ENCODE measurements at regions of chr4 and their contacts with region 1.

Region 1: DNA sequence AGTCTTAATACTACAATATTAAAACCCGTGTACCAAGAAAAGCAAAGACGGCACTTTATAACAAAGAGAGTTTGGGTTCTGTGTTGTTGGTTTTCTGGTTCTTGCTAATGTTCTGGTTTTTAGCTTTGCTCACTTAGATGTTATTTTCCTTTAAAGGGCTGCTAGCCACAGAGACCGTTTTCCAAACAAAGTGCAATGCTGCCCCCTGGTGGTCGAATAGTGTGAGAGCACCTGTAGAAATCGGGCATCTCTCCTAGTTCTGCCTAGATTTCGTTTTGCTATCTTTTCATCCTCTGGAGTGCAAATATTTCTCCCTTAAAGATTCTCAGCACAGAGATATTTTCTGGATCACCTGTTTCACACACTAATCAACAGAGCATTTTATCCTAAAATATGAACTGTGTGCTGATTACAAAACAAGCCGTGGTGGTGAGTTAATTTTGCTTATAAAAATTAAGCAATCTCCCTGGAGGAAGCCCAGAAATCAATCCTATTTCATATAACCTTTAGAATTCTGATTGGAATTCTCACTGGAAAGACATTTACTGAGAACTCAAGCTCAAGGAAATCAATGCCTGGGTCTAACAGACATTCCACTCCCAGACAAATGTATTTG is 334.5 kb upstream of the NOCT start:
- DNase-seq: peak; percentile 42
- ATAC-seq: peak; percentile 86
- H3K4me3 ChIP-seq: no peak overlapping the region
- H3K27ac ChIP-seq: no peak overlapping the region
- H3K4me1 ChIP-seq: no peaks in the 10 kb centered on the region
- H3K27me3 ChIP-seq: no peaks in the 10 kb centered on the region; the same call in 1 of the 2 replicates
- CTCF ChIP-seq: peak; percentile 77

Region 2: GRCh38 chr4:138090150-138090917 is 590.8 kb before region 1 on chr4:
- CTCF ChIA-PET with region 1: no interaction called
- POLR2A ChIA-PET with region 1: no interaction called
- in situ Hi-C with region 1: no loop called
- intact Hi-C with region 1: loop called (anchors 10 kb)
- DNase-seq: peak; percentile 54
- ATAC-seq: peak; percentile 80
- H3K4me3 ChIP-seq: peak overlapping the region in 1 of 2 experiments; percentile 3; a peak in 1 of 4 replicates
- H3K27ac ChIP-seq: no peak overlapping the region
- H3K4me1 ChIP-seq: no peaks in the 10 kb centered on the region
- H3K27me3 ChIP-seq: no peaks in the 10 kb centered on the region
- CTCF ChIP-seq: peak; percentile 77

Region 3: GRCh38 chr4:138562544-138562991 is 118.5 kb before region 1 on chr4:
- CTCF ChIA-PET with region 1: no interaction called
- POLR2A ChIA-PET with region 1: no interaction called
- in situ Hi-C with region 1: no loop called
- intact Hi-C with region 1: no loop called
- DNase-seq: no peak
- ATAC-seq: no peak
- H3K4me3 ChIP-seq: no peak overlapping the region
- H3K27ac ChIP-seq: no peak overlapping the region
- H3K4me1 ChIP-seq: no peaks in the 10 kb centered on the region
- H3K27me3 ChIP-seq: no peaks in the 10 kb centered on the region
- CTCF ChIP-seq: no peak

Region 4: GRCh38 chr4:138870737-138871554 is 189.8 kb after region 1 on chr4:
- CTCF ChIA-PET with region 1: interaction called, 3 read pairs
- POLR2A ChIA-PET with region 1: no interaction called
- in situ Hi-C with region 1: no loop called
- intact Hi-C with region 1: loop called (anchors 5 kb)
- DNase-seq: peak; percentile 50
- ATAC-seq: peak; percentile 86
- H3K4me3 ChIP-seq: no peak overlapping the region
- H3K27ac ChIP-seq: no peak overlapping the region
- H3K4me1 ChIP-seq: no peaks in the 10 kb centered on the region
- H3K27me3 ChIP-seq: no peaks in the 10 kb centered on the region; the same call in 1 of the 2 replicates
- CTCF ChIP-seq: peak; percentile 78

Region 5: GRCh38 chr4:138943893-138944292 is 262.8 kb after region 1 on chr4:
- CTCF ChIA-PET with region 1: no interaction called
- POLR2A ChIA-PET with region 1: no interaction called
- in situ Hi-C with region 1: no loop called
- intact Hi-C with region 1: no loop called
- DNase-seq: no peak
- ATAC-seq: no peak
- H3K4me3 ChIP-seq: no peak overlapping the region
- H3K27ac ChIP-seq: no peak overlapping the region
- H3K4me1 ChIP-seq: no peaks in the 10 kb centered on the region
- H3K27me3 ChIP-seq: no peaks in the 10 kb centered on the region
- CTCF ChIP-seq: no peak

Region 6: DNA sequence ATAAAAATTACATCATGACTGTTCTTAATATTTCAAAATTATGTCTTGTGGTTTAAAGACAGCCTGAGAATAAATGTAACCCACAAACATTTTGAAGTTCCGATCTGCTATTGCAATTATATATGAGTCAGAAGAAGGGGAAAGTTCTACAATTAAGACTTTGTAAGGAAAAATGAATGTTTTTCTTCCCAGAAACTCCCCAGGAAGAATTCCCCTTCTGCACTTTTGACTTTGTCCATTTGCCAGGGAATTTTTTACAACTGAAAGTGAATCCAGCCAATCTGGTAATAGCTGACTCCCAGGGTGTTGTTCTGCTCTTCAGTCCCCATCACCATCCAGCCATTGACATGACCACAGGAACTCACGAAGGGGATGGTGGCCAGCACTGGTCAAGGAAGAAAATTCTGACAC is 272.9 kb after region 1 on chr4:
- CTCF ChIA-PET with region 1: no interaction called
- POLR2A ChIA-PET with region 1: no interaction called
- in situ Hi-C with region 1: no loop called
- intact Hi-C with region 1: no loop called
- DNase-seq: no peak
- ATAC-seq: no peak
- H3K4me3 ChIP-seq: no peak overlapping the region
- H3K27ac ChIP-seq: no peak overlapping the region
- H3K4me1 ChIP-seq: no peaks in the 10 kb centered on the region
- H3K27me3 ChIP-seq: no peaks in the 10 kb centered on the region
- CTCF ChIP-seq: no peak